IMR-90 (cell line): ENCODE measurements at regions of chr22 and their contacts with region 1.

Region 1: DNA sequence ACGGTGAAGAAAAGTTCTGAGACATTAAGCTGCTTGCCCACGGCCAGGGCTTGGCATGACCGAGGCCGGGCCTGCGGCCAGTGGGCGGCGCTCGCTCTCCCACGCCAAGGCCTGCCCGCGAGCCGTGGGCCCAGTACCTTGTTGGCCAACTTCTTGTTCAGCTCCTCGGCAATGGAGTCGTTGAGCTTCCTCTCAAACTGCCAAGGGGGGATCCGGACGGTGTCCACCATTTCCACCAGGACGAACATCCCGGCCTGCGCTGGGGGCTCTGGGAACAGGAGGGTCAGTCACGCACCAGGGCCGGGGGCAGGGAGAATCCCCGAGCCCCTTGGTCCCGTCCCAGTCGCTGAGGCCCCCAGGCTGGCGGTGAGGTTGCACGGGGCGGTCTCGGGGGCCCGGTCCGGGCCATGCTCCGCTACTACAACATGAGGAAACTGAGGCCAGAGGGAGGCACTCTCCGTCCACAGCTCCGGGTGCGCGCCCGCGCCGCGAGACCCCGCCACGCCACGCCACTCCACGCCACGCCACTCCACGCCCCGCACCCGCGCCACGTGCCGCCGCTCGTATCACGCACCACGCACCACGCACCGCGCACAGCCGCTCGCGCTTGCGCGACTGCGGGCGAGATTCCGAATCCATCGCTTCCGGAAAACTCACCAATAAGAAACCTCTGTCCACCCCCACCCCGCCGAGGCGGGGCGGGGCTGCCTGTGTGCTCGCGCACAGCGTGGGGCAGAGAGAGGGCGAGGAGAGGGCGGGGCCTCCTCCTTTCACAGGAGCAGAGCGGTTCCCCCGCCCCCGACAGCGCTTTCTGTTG is at the start of gene POLR3H:
- DNase-seq: peak; percentile 96
- ATAC-seq: peak; percentile 99
- H3K4me3 ChIP-seq: peak within 1 kb of the TSS; percentile 84
- H3K27ac ChIP-seq: peak within 1 kb of the TSS; percentile 93
- H3K4me1 ChIP-seq: peaks cover 11% of the 10 kb centered on the region
- H3K27me3 ChIP-seq: no peaks in the 10 kb centered on the region
- CTCF ChIP-seq: peak; percentile 65
- POLR2A ChIP-seq: peak; percentile 71
- RAD21 ChIP-seq: peak; percentile 66
- total RNA-seq, gene POLR3H: 37.8 and 39.7 TPM in 2 replicates

Region 2: DNA sequence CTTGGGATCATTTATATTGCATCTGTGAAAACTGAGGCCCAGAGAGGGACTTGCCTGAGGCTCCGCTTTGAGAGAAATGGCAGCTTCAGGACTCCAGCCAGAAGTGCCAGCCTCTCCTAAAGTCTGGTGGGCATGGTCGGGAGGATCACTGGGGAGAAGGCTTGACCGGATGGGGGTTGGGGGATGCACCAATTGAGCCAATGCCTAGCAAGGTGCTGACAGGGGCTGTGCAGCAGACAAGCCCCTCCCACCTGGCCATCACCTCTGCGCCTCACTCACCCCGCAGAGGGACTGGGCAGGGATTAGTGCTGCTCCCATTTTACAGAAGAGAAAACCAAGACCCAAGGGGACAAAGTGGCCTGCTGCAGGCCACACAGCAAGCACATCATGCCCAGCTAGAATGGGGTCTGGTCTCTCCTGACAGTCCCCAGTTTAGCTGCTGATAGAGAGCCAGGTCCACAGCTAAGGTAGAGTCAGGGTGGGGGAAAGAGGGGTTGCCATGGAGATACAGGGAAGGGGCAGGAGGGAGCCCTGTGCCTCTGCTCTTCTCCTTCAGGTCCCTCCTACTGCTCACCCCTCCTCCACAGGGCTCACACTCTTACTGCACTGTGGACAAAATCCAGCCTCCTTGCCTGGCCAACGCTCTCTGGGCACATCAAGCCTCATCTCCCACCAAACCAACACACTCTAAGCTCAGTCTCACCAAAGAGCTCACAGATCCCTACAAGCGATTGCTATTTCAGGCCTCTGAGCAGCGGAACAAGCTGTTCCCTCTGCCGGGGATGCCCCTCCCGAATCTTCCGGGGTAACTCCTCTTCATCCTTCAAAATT is 132.8 kb before region 1 on chr22:
- CTCF ChIA-PET with region 1: no interaction called
- POLR2A ChIA-PET with region 1: no interaction called
- dilution Hi-C with region 1: no loop called
- in situ Hi-C with region 1: no loop called
- intact Hi-C with region 1: no loop called
- DNase-seq: no peak
- ATAC-seq: no peak
- H3K4me3 ChIP-seq: no peak overlapping the region
- H3K27ac ChIP-seq: no peak overlapping the region
- H3K4me1 ChIP-seq: peaks cover 11% of the 10 kb centered on the region
- H3K27me3 ChIP-seq: no peaks in the 10 kb centered on the region
- CTCF ChIP-seq: no peak
- POLR2A ChIP-seq: no peak
- RAD21 ChIP-seq: no peak

Region 3: DNA sequence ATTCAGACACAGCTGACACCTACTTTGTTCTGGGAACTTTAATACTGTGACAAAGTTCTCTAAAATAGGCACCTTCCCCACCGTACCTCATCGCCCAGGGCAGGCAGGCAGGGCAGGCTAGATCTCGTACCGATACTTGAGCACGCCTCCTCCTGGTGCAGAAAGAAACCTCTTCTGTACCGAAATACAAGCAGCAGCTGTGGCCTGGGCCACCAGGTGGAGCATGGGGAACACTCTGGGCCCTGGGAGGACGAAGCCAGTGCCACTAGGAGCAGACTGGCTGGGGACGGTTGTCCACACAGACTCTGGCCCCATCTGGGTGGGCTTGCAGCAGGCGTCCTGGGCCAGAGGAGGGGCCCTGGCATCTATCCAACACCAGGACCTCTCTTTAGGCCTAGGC is 32.8 kb after region 1 on chr22:
- CTCF ChIA-PET with region 1: no interaction called
- POLR2A ChIA-PET with region 1: no interaction called
- dilution Hi-C with region 1: no loop called
- in situ Hi-C with region 1: no loop called
- intact Hi-C with region 1: loop called (anchors 1 kb)
- DNase-seq: peak; percentile 52
- ATAC-seq: peak; percentile 52
- H3K4me3 ChIP-seq: no peak overlapping the region
- H3K27ac ChIP-seq: no peak overlapping the region
- H3K4me1 ChIP-seq: peaks cover 7% of the 10 kb centered on the region; the same call in 1 of the 2 replicates
- H3K27me3 ChIP-seq: no peaks in the 10 kb centered on the region
- CTCF ChIP-seq: peak; percentile 64
- POLR2A ChIP-seq: no peak
- RAD21 ChIP-seq: peak; percentile 59

Region 4: DNA sequence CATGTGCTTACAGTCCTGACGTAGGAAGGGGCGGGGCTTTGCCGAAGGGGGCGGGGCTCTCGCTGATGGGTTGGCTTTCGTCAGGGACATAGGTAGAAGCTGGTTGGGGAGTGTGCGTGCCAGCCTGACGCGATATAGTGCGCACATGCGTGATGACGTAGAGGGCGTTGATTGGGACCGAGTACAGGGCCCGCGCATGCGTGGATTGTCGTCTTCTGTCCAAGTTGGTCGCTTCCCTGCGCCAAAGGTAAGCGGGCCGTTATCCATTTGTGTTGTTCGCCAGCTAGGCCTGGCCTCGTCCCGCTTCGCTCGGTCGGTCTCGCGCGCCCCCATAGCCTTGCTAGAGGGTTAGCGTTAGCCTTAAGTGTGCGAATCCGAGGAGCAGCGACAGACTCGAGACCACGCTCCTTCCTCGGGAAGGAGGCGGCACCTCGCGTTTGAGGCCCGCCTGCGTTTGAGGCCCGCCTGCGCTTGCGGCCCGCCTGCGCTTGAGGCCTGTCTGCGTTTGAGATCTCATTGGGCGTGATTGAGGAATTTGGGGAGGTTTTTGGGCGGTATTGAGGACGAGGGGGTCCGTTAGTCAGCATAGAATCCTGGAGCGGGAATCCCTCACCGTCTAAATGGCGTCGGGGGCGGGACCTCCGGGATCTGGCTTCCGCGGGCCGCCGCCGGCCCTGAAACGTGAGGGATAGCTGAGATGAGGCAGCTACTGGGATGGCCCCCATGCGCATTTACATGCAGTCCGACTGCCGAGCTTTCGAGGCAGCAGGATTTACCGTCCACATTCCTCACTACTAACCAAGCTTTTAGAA is 77.2 kb after region 1 on chr22 and contains the start of gene XRCC6:
- CTCF ChIA-PET with region 1: no interaction called
- POLR2A ChIA-PET with region 1: no interaction called
- dilution Hi-C with region 1: no loop called
- in situ Hi-C with region 1: no loop called
- intact Hi-C with region 1: loop called (anchors 2 kb)
- DNase-seq: peak; percentile 100
- ATAC-seq: peak; percentile 97
- H3K4me3 ChIP-seq: peak within 1 kb of the TSS; percentile 84
- H3K27ac ChIP-seq: peak within 1 kb of the TSS; percentile 94
- H3K4me1 ChIP-seq: peaks cover 2% of the 10 kb centered on the region; the same call in 1 of the 2 replicates
- H3K27me3 ChIP-seq: no peaks in the 10 kb centered on the region
- CTCF ChIP-seq: no peak
- POLR2A ChIP-seq: peak; percentile 94
- RAD21 ChIP-seq: no peak
- total RNA-seq, gene XRCC6: 392 and 401 TPM in 2 replicates